ENCODE measurements at regions of chrX and their contacts with region 1.

Region 1: GRCh38 chrX:110853610-110854009 is 58.0 kb upstream of the CHRDL1 start:
- ATAC-seq: peak in 5 of 8 experiments; percentile 42 to 93 (median 66)
- H3K4me3 ChIP-seq: no peak overlapping the region
- H3K27ac ChIP-seq: no peak overlapping the region
- H3K4me1 ChIP-seq: no peaks in the 10 kb centered on the region

Region 2: DNA sequence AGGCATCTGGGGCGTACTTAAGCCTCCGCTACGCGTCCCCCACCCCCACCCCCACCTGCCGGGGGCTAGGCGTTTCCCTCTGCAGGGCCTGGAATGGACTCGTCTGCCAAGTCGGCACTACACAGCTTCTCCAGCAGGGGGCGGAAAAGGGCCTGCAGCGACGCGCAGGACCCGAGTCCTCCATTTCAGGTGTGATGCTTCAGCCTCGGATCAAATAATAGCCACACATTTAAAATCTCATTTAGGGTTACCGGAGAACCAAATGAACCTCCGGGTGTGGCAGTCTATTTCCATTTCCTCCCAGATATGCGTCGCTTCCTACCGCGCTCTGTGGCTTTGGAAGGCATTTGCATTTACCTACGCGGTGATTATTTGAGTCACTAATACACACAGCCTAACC is 245.3 kb after region 1 on chrX:
- in situ Hi-C with region 1: loop called in 1 of 9 experiments (anchors 25 kb)
- ATAC-seq: peak in 1 of 8 experiments; percentile 8
- H3K4me3 ChIP-seq: no peak overlapping the region
- H3K27ac ChIP-seq: no peak overlapping the region
- H3K4me1 ChIP-seq: peaks cover 0 to 7% of the 10 kb centered on the region in 2 donors

Region 3: DNA sequence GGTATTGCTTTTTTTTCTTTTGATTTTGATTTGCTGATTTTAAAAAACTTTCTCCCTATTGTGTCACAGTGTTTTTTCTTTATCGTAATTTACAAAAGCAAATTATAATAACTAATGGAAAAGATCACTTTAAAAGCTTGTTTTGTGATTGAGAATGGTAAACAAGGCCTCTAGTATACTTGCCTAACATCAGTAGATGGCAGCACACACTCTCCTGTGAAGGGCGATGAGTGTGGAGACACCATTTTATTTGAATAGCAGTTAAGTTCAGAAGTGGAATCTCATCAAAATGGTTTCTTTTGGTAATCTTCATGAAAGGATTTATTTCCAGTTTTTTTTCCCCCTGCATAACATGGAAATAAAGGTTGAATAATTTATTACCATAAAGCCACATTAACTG is 314.7 kb after region 1 on chrX:
- in situ Hi-C with region 1: no loop called
- ATAC-seq: peak in 2 of 8 experiments; percentile 40 to 62
- H3K4me3 ChIP-seq: no peak overlapping the region
- H3K27ac ChIP-seq: no peak overlapping the region
- H3K4me1 ChIP-seq: no peaks in the 10 kb centered on the region

Region 4: DNA sequence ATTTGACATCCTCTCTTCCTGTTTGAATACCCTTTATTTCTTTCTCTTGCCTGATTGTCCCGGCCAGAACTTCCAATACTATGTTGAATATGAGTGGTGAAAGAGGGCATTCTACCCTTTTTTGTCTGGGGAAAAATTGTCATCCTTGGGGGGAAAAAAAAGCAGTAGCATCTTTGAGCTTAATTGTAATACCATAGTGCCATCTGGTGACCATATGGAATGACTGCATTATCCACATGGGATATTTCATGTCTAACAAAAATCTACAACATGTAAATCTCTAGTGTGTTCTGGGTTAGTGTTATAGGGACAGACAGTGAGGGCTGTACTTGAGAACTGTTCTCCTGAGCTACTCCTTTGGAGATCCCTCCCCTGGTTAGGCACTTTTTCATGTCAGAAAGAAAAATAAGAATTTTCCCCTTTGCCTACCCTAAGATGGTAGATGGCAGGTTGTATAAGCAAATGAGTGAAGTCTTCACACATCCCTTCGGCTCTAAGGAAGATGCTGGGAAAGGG is 390.7 kb after region 1 on chrX:
- in situ Hi-C with region 1: loop called in 4 of 9 experiments (anchors 25 kb)
- ATAC-seq: no peak
- H3K4me3 ChIP-seq: no peak overlapping the region
- H3K27ac ChIP-seq: no peak overlapping the region
- H3K4me1 ChIP-seq: no peaks in the 10 kb centered on the region

Region 5: DNA sequence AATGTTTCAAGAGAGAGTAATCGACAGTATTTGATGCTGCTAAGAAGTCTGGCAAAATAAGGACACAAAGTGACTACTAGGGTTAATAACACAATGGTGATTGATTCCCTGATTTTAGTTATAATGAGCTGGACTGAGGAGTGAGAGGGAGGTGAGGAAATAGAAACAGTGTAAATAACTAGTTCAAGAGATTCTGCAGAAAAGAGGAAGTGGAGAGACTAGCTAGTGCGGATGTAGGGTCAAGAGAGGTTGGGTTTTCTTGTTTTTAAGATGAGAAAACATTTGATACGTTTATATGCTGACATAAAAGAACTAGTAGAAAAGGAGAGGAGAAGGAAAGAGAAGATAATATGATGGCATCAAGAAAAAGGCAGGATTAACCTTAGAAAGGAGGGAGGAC is 1241.1 kb after region 1 on chrX:
- in situ Hi-C with region 1: no loop called
- ATAC-seq: no peak
- H3K4me3 ChIP-seq: no peak overlapping the region
- H3K27ac ChIP-seq: no peak overlapping the region
- H3K4me1 ChIP-seq: no peaks in the 10 kb centered on the region